H1 (cell line): ENCODE measurements at regions of chr14 and their contacts with region 1.

Region 1: DNA sequence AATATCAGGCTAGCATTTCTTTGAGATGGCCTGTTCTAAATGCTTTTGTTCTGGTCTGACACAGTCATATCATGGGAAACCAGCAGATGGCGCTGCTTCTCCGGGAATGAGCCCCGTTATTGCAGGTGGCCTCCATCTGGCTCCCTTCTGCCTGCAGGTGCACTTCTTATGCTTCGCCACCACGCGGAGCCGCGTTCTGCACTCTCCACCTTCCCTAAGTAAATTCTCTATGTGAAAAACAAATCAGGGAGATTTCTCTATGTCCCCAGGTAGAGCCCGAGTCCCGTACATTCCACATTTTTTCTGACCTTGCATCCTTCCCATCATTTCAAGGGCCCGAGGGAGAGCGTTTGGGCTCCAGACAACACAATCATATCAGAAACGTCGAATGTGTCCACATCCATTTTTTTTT is 26.2 kb downstream of the GLRX5 start:
- DNase-seq: peak; percentile 83 to 98
- H3K4me3 ChIP-seq: no peak overlapping the region
- H3K27ac ChIP-seq: no peak overlapping the region
- H3K4me1 ChIP-seq: peaks cover 0 to 5% (median 4%) of the 10 kb centered on the region in 4 experiments; a peak in 6 of 7 replicates
- H3K27me3 ChIP-seq: no peaks in the 10 kb centered on the region; a peak in 2 of 7 replicates
- CTCF ChIP-seq: peak; percentile 99 to 100 (median 99)
- EP300 ChIP-seq: peak in 1 of 2 experiments; percentile 31; a peak in 1 of 3 replicates
- POLR2A ChIP-seq: no peak
- RAD21 ChIP-seq: peak; percentile 100

Region 2: GRCh38 chr14:95545179-95546168 is 15.5 kb before region 1 on chr14:
- CTCF ChIA-PET with region 1: interaction called, 14 read pairs
- POLR2A ChIA-PET with region 1: interaction called, 4 read pairs
- DNase-seq: no peak
- H3K4me3 ChIP-seq: no peak overlapping the region
- H3K27ac ChIP-seq: no peak overlapping the region
- H3K4me1 ChIP-seq: no peaks in the 10 kb centered on the region; a peak in 1 of 7 replicates
- H3K27me3 ChIP-seq: no peaks in the 10 kb centered on the region
- CTCF ChIP-seq: no peak
- EP300 ChIP-seq: no peak
- POLR2A ChIP-seq: no peak
- RAD21 ChIP-seq: no peak

Region 3: GRCh38 chr14:95585953-95586620 is 25.1 kb after region 1 on chr14:
- CTCF ChIA-PET with region 1: interaction called, 13 read pairs
- POLR2A ChIA-PET with region 1: no interaction called
- DNase-seq: no peak
- H3K4me3 ChIP-seq: no peak overlapping the region
- H3K27ac ChIP-seq: no peak overlapping the region
- H3K4me1 ChIP-seq: no peaks in the 10 kb centered on the region
- H3K27me3 ChIP-seq: no peaks in the 10 kb centered on the region; a peak in 1 of 7 replicates
- CTCF ChIP-seq: no peak
- EP300 ChIP-seq: no peak
- POLR2A ChIP-seq: no peak
- RAD21 ChIP-seq: no peak

Region 4: GRCh38 chr14:95683793-95684192 is 122.8 kb after region 1 on chr14:
- CTCF ChIA-PET with region 1: interaction called, 107 read pairs
- POLR2A ChIA-PET with region 1: no interaction called
- DNase-seq: peak in 1 of 2 experiments; percentile 74
- H3K4me3 ChIP-seq: no peak overlapping the region
- H3K27ac ChIP-seq: no peak overlapping the region
- H3K4me1 ChIP-seq: peaks cover 6 to 13% (median 9%) of the 10 kb centered on the region in 4 experiments
- H3K27me3 ChIP-seq: peaks cover 0 to 3% (median 0%) of the 10 kb centered on the region in 4 experiments; a peak in 3 of 7 replicates
- CTCF ChIP-seq: peak; percentile 94 to 97 (median 95)
- EP300 ChIP-seq: no peak
- POLR2A ChIP-seq: no peak
- RAD21 ChIP-seq: peak; percentile 91 to 94

Region 5: GRCh38 chr14:95774265-95775160 is 213.5 kb after region 1 on chr14:
- CTCF ChIA-PET with region 1: interaction called, 22 read pairs
- POLR2A ChIA-PET with region 1: no interaction called
- DNase-seq: peak in 1 of 2 experiments; percentile 87
- H3K4me3 ChIP-seq: no peak overlapping the region
- H3K27ac ChIP-seq: no peak overlapping the region
- H3K4me1 ChIP-seq: peaks cover 0 to 4% (median 0%) of the 10 kb centered on the region in 4 experiments; a peak in 2 of 7 replicates
- H3K27me3 ChIP-seq: peaks cover 0 to 19% (median 9%) of the 10 kb centered on the region in 4 experiments; a peak in 4 of 7 replicates
- CTCF ChIP-seq: peak; percentile 49 to 92 (median 69)
- EP300 ChIP-seq: no peak
- POLR2A ChIP-seq: no peak
- RAD21 ChIP-seq: peak; percentile 75 to 83

Region 6: DNA sequence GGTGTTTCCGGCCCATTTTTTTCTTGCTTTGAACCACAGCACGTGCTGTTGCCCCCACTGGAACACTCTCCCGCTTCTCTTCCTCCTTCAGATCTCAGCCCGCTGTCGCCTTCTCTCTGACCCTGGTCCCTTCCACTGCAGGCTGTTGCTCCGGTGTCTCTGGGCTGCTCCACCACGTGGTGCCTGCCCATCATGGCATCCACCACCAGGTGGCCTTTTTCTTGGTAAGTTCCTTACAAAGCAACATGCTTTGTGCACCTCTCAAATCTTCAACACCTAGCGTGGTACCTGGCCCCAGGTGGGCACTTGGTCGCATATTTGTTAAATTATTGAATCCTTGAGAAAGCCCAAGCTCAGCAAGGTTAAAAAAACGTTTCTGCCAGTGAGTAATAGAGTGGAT is 334.7 kb after region 1 on chr14:
- CTCF ChIA-PET with region 1: interaction called, 13 read pairs
- POLR2A ChIA-PET with region 1: no interaction called
- DNase-seq: peak; percentile 34 to 77
- H3K4me3 ChIP-seq: no peak overlapping the region
- H3K27ac ChIP-seq: no peak overlapping the region
- H3K4me1 ChIP-seq: peaks cover 8 to 19% (median 17%) of the 10 kb centered on the region in 4 experiments
- H3K27me3 ChIP-seq: no peaks in the 10 kb centered on the region
- CTCF ChIP-seq: peak; percentile 68 to 75 (median 72)
- EP300 ChIP-seq: no peak
- POLR2A ChIP-seq: no peak
- RAD21 ChIP-seq: peak; percentile 46 to 71

Region 7: DNA sequence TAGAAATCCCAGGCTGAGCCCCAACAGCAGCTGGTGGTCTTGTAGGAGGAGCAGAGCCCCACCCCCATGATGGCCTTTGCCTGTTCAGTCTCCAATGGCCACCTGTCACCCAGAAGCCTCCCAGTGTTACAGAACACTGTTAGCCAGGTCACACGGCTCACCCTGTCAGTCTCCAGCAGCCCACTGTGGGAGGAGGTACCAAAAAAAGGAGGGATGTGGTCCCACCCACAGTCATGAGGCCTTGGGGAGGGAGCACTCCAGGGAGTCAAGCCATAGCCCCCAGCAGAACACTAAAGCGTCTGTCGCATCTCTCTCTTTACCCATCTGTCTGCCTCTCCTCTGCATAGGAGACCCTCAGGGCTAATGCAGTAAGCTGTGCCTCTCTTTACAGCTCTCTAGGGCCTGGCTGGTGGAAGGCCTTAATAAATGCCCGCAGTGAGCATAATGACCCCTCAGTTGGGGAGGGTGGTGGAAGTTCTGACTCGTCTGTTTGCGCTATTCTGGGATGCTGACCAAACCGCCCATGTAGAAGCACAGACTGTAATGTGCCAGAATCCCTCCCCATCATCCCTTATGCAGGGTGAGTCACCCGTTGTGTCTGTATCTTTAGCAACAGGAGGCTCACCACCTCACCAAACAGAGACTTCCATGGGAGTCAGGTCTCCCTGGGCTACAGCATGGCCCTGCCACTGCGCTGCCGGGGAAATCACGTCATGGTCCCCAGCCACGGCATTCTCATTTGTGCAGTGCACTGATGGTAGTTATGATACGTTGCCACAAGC is 492.8 kb after region 1 on chr14:
- CTCF ChIA-PET with region 1: interaction called, 15 read pairs
- POLR2A ChIA-PET with region 1: no interaction called
- DNase-seq: peak in 1 of 2 experiments; percentile 35
- H3K4me3 ChIP-seq: no peak overlapping the region
- H3K27ac ChIP-seq: no peak overlapping the region
- H3K4me1 ChIP-seq: no peaks in the 10 kb centered on the region; a peak in 2 of 7 replicates
- H3K27me3 ChIP-seq: no peaks in the 10 kb centered on the region
- CTCF ChIP-seq: no peak
- EP300 ChIP-seq: no peak
- POLR2A ChIP-seq: no peak
- RAD21 ChIP-seq: no peak